Esophagus squamous epithelium (tissue), 5 donors: ENCODE measurements at regions of chr17 and their contacts with region 1.

Region 1: GRCh38 chr17:44159519-44160210 is 10.8 kb upstream of the ASB16 start:
- DNase-seq: no peak
- H3K4me3 ChIP-seq: no peak overlapping the region
- H3K27ac ChIP-seq: no peak overlapping the region
- H3K4me1 ChIP-seq: no peaks in the 10 kb centered on the region
- H3K27me3 ChIP-seq: no peaks in the 10 kb centered on the region
- CTCF ChIP-seq: no peak
- POLR2A ChIP-seq: no peak

Region 2: DNA sequence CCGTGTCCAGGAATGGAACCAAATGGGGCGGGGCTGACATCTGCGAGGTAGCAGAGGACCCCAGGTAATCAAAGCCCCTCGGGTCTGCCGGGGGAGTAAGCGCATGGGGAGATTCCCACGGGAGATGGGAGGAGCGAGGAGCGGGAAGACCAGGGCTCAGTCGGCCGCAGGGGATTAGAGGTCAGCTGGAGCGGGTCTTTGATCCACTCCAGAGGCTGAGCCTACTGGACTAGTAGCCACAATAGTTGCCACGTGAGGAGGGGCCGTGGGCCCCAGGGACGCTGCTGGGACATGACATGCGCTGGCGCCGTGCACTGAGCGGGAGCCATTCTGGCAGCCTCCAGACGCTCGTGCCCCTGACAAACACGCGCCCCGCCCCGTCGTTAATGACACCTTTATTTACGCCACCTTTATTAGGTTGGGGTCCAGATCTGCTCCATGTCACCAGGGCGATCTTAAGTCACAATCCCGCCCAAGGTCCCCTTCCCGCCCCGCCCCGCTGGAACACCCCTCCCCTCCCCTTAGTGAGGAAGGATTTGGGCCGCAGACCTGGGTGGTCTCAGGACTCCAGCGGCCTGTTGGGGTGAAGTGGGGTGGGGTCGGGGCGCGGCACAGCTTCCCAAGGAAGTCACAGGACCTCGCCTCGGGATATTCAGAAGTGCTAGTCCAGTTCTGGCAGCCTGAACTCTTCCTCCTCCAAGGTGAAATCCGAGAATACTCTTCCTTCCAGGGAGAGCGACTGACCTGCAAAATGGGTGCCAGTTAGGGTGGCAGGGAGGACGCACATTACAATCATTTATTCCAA is 232.4 kb before region 1 on chr17:
- intact Hi-C with region 1: loop called (anchors 10 kb)
- DNase-seq: no peak
- H3K4me3 ChIP-seq: peak overlapping the region in 3 of 4 donors; percentile 35 to 59 (median 41)
- H3K27ac ChIP-seq: no peak overlapping the region
- H3K4me1 ChIP-seq: peaks cover 9 to 12% (median 9%) of the 10 kb centered on the region in 3 donors
- H3K27me3 ChIP-seq: peaks cover 0 to 60% (median 0%) of the 10 kb centered on the region in 4 donors
- CTCF ChIP-seq: no peak
- POLR2A ChIP-seq: no peak